ENCODE measurements at regions of chr19 and their contacts with region 1.

Region 1: GRCh38 chr19:10194500-10195289 is at the start of gene DNMT1:
- DNase-seq: peak; percentile 100

Region 2: DNA sequence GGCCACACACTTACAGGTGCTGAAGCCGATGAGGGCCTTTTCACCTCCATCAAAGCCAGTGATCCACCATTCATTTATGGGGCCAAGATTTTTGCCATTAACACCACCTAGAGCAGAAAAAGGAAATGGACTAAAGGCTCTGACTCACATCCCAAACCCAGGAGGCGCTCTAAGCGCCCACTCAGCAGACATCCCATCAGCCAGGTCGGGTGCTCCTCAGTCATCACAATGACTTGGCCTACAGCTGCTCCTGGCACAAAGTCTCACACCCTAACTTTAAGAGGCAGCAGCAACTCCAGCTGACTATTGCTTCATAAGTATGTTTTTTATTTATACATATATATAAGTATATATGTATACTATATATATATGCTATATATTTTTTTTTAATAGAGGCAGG is 38.9 kb before region 1 on chr19:
- CTCF ChIA-PET with region 1: no interaction called
- POLR2A ChIA-PET with region 1: no interaction called
- DNase-seq: no peak

Region 3: GRCh38 chr19:10206226-10206885 is 11.7 kb after region 1 on chr19:
- CTCF ChIA-PET with region 1: no interaction called
- POLR2A ChIA-PET with region 1: interaction called, 27 read pairs
- DNase-seq: no peak

Region 4: DNA sequence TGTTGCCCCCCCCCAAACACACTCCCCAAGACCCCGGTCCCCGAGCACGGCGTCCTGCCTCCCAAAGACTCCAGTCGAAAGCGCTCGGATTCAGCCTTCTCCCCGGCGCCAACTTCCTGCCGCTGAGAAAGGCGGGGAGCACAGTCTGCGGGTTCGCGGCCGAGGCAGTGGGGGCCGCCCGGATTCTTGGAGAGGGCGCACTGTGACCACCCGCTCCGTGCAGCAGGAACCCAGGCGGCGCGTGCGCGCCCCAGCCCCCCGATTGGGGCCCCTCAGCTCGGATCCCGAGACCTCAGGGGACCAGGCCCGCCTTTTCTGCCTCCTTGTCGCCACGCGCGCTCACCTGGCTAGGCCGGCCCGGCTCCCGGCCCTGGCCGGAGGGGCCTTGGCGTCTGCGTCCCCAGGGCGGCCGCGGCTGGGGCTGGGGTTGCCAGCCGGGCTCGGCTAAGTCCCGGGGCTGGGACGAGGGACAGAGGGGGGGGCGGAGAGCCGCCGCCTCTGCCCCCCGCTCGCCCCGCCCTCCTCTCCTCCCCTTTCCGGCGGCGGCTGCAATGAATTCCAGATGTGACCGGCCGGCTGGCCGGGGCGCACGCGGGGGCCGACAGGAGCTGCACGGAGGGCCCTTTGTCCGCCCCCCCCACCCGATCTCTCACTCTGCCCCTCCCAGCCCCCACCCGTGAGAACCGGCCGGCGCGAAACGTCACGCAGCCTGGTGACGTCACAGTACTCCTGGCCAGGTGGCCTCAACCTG is 36.3 kb after region 1 on chr19 and contains the start of gene S1PR2:
- CTCF ChIA-PET with region 1: no interaction called
- POLR2A ChIA-PET with region 1: interaction called, 10 read pairs
- DNase-seq: peak; percentile 80

Measured in HEK293T (cell line).